Endothelial cell of umbilical vein (primary cell): ENCODE measurements at regions of chr19 and their contacts with region 1.

Region 1: DNA sequence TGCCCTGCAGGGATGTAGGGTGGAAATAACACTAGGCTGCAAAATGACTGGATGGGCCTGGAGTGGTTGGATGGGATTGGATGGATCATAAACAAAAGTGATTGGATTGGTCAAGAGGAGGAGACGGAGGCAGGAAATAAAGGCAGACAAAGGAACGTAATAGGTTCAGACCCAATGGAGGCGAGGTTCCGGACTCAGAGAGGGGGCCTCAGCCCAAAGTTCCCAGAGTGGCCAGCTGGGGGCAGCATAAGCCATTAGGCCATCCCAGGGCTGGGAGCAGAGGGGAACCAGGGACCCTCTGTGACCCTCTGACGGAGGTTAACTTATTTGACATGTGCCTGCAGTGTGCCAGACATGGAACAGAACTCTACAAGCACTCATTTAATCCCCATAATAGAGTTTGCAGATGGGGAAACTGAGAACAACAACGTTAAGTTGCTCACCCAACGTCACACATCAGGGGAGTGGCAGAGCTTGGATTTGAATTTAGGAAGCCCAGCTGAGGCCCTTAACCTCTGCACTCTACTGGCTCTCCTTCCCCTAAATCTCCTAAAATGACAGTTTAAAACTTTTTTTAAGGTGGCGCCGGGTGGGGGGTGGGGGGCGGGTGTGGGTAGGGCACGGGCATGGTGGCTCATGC is 15.3 kb upstream of the MAP1S start:
- DNase-seq: peak; percentile 60
- H3K4me3 ChIP-seq: no peak overlapping the region
- H3K27ac ChIP-seq: no peak overlapping the region
- H3K4me1 ChIP-seq: no peaks in the 10 kb centered on the region
- H3K27me3 ChIP-seq: no peaks in the 10 kb centered on the region
- CTCF ChIP-seq: peak; percentile 85
- POLR2A ChIP-seq: no peak

Region 2: DNA sequence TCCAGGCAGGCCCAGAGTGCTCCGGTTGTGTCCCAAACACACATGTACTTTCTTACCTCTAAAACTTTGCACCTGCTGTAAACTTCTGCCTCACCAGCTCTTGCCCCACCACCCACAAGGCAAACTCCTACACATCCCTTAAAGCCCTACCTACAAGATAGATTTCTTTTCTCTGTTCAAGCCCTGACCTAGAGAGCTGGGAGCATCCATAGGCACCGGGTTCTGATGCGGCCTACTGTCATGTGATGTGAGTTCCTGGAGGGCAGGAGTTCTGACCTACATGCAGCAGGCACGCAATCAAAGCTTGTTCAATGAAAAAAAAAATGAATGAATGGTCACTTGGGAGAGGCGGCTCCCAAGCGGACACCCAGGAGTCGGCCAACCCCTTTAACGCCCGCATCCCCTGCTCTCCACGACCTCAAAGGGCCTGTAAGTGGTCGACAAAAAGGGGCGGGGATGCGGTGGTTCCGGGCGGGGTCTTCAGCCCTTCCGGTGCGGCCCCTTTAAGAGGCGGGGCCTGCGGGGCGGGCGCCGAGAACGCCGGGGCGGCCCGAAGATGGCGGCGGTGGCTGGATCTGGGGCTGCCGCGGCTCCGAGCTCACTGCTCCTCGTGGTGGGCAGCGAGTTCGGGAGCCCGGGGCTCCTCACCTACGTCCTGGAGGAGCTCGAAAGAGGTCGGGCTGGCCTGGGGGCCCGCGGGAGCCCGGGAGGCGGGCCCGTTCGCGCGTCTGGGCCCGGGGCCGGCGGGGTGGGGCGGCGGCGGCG is 15.2 kb after region 1 on chr19 and contains the start of gene MAP1S:
- CTCF ChIA-PET with region 1: interaction called, 13 read pairs
- POLR2A ChIA-PET with region 1: no interaction called
- dilution Hi-C with region 1: no loop called
- intact Hi-C with region 1: no loop called
- DNase-seq: peak; percentile 46
- H3K4me3 ChIP-seq: peak within 1 kb of the TSS; percentile 76 to 96 (median 90)
- H3K27ac ChIP-seq: peak within 1 kb of the TSS; percentile 90
- H3K4me1 ChIP-seq: peaks cover 35% of the 10 kb centered on the region
- H3K27me3 ChIP-seq: no peaks in the 10 kb centered on the region
- CTCF ChIP-seq: no peak
- POLR2A ChIP-seq: peak; percentile 92
- total RNA-seq, gene MAP1S: 143 and 166 TPM in 2 replicates

Region 3: GRCh38 chr19:17747205-17748098 is 43.5 kb after region 1 on chr19:
- CTCF ChIA-PET with region 1: no interaction called
- POLR2A ChIA-PET with region 1: no interaction called
- dilution Hi-C with region 1: no loop called
- intact Hi-C with region 1: loop called (anchors 5 kb)
- DNase-seq: peak; percentile 90
- H3K4me3 ChIP-seq: peak overlapping the region in 1 of 3 experiments; percentile 42
- H3K27ac ChIP-seq: no peak overlapping the region
- H3K4me1 ChIP-seq: peaks cover 4% of the 10 kb centered on the region
- H3K27me3 ChIP-seq: peaks cover 0 to 2% of the 10 kb centered on the region in 2 experiments
- CTCF ChIP-seq: no peak
- POLR2A ChIP-seq: no peak

Region 4: DNA sequence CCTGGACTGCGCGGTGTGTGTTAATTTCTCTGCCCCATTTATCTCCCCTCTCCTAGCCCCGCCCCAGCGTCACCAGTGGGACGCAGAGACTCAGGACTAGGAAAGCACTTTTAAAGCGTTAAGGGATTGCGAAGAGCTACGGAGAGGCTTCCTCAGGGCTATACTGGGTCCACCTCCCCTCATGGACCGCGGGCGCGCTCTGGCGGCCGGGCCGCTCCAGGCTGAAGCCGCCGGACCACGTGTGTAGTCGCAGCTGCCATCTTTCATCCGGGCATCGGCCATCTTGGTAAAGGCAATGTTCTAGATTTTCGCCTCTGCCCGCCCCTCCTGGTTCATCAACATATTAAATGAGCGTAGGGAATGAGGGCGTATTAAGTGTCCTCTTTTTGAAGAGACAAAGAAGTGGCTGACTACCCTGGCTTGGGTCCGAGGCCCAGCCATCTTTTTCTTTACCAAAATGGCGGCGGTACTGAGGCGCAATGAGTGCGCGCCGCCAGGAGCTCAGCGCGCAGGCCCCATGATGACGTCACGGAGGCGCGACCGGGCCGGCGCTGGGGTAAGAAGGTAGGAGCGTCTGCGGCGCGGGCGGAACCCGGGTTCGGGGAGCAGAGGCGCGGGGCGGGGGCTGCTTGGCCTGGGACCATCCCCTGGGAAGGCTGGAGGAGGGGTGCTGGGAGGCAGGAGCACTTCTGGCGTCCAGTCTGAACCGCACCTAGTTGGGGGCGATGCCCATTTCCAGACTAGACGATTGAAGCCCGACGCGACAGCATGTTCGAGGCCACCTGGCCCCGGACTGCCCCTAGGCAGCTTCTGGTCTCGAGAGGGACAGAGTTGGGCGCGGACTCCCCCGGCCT is 228.8 kb after region 1 on chr19 and contains the start of gene CCDC124:
- CTCF ChIA-PET with region 1: no interaction called
- POLR2A ChIA-PET with region 1: no interaction called
- dilution Hi-C with region 1: no loop called
- intact Hi-C with region 1: no loop called
- DNase-seq: peak; percentile 92
- H3K4me3 ChIP-seq: peak within 1 kb of the TSS; percentile 93 to 98 (median 95)
- H3K27ac ChIP-seq: peak within 1 kb of the TSS; percentile 91
- H3K4me1 ChIP-seq: peaks cover 16% of the 10 kb centered on the region
- H3K27me3 ChIP-seq: no peaks in the 10 kb centered on the region
- CTCF ChIP-seq: peak; percentile 92 to 96
- POLR2A ChIP-seq: peak; percentile 78
- total RNA-seq, gene CCDC124: 115 and 123 TPM in 2 replicates